Heart left ventricle (tissue), 16 donors: ENCODE measurements at regions of chr12 and their contacts with region 1.

Region 1: GRCh38 chr12:69639400-69640016 is 28.8 kb upstream of the LRRC10 start:
- DNase-seq: peak; percentile 43 to 79 (median 64)
- ATAC-seq: peak in 3 of 4 donors; percentile 53 to 74 (median 66)
- H3K4me3 ChIP-seq: no peak overlapping the region
- H3K27ac ChIP-seq: no peak overlapping the region
- H3K4me1 ChIP-seq: peaks cover 0 to 18% (median 0%) of the 10 kb centered on the region in 12 donors
- H3K27me3 ChIP-seq: no peaks in the 10 kb centered on the region
- CTCF ChIP-seq: peak; percentile 72 to 91 (median 86)
- POLR2A ChIP-seq: no peak

Region 2: GRCh38 chr12:69211160-69211559 is 428.3 kb before region 1 on chr12:
- intact Hi-C with region 1: no loop called
- DNase-seq: no peak
- ATAC-seq: no peak
- H3K4me3 ChIP-seq: no peak overlapping the region
- H3K27ac ChIP-seq: no peak overlapping the region
- H3K4me1 ChIP-seq: no peaks in the 10 kb centered on the region
- H3K27me3 ChIP-seq: no peaks in the 10 kb centered on the region
- CTCF ChIP-seq: no peak
- POLR2A ChIP-seq: no peak

Region 3: DNA sequence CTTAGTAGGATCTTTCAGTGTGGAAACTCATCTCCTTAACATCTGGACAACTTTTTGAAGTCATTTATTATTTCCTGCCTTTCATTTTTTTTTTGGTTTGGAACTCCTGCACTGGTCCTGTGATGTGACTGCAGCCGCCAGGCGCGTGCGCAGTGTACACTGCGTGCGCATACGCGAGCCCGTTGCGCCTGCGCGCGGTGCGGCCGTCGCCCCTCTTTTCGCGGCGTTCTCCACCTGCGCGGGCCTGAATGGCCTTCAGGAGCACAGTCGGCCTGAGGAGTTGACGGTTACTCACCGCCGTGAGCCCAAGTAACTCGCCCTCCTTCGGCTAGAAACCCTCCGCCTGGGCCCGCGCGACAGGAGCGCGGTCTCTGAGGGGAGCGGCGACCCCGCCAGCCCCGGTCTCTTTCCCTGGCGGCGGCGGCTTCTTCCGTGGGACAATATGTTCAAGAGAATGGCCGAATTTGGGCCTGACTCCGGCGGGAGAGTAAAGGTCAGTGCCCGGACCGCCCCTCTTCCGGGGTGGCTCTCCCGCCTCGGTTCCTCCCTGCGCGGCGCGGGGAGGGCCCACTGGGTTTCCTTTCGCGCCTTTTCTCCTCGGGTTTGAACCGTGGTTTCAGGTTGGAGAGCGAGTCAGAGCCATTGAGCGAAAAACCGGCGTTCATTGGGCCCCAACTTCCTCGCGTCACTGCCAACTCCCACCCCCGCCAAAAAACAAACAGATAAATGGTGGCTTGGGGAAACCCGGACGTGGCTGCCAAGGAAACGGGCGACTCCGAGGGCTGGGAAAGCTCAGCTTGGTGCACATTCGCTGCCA is 279.8 kb before region 1 on chr12 and contains the start of gene YEATS4:
- intact Hi-C with region 1: loop called in 4 of 10 experiments (anchors 1 to 5 kb)
- DNase-seq: peak; percentile 82 to 92 (median 86)
- ATAC-seq: peak; percentile 96 to 98 (median 98)
- H3K4me3 ChIP-seq: peak within 1 kb of the TSS; percentile 52 to 93 (median 80)
- H3K27ac ChIP-seq: peak within 1 kb of the TSS; percentile 83 to 99 (median 92)
- H3K4me1 ChIP-seq: peaks cover 0 to 25% (median 9%) of the 10 kb centered on the region in 12 donors
- H3K27me3 ChIP-seq: no peaks in the 10 kb centered on the region
- CTCF ChIP-seq: no peak
- POLR2A ChIP-seq: no peak
- total RNA-seq, gene YEATS4: 6.7 to 45.0 (median 9.9) TPM

Region 4: GRCh38 chr12:69388371-69388770 is 251.1 kb before region 1 on chr12:
- intact Hi-C with region 1: loop called in 3 of 10 experiments (anchors 10 kb)
- DNase-seq: no peak
- ATAC-seq: no peak
- H3K4me3 ChIP-seq: no peak overlapping the region
- H3K27ac ChIP-seq: no peak overlapping the region
- H3K4me1 ChIP-seq: no peaks in the 10 kb centered on the region
- H3K27me3 ChIP-seq: no peaks in the 10 kb centered on the region
- CTCF ChIP-seq: peak; percentile 37 to 70 (median 56)
- POLR2A ChIP-seq: no peak

Region 5: GRCh38 chr12:69415471-69416275 is 223.8 kb before region 1 on chr12:
- intact Hi-C with region 1: loop called in 1 of 10 experiments (anchors 10 kb)
- DNase-seq: peak; percentile 29 to 60 (median 54)
- ATAC-seq: peak in 3 of 4 donors; percentile 81 to 94 (median 91)
- H3K4me3 ChIP-seq: peak overlapping the region in 3 of 12 donors; percentile 2 to 23 (median 11)
- H3K27ac ChIP-seq: peak overlapping the region in 2 of 12 donors; percentile 22 to 41
- H3K4me1 ChIP-seq: peaks cover 0 to 11% (median 3%) of the 10 kb centered on the region in 12 donors
- H3K27me3 ChIP-seq: no peaks in the 10 kb centered on the region
- CTCF ChIP-seq: peak; percentile 42 to 82 (median 66)
- POLR2A ChIP-seq: no peak

Region 6: GRCh38 chr12:69540987-69541386 is 98.5 kb before region 1 on chr12:
- intact Hi-C with region 1: no loop called
- DNase-seq: no peak
- ATAC-seq: no peak
- H3K4me3 ChIP-seq: no peak overlapping the region
- H3K27ac ChIP-seq: no peak overlapping the region
- H3K4me1 ChIP-seq: no peaks in the 10 kb centered on the region
- H3K27me3 ChIP-seq: no peaks in the 10 kb centered on the region
- CTCF ChIP-seq: no peak
- POLR2A ChIP-seq: no peak

Region 7: GRCh38 chr12:69585189-69586062 is 54.1 kb before region 1 on chr12 and contains the start of gene CCT2:
- intact Hi-C with region 1: loop called in 2 of 10 experiments (anchors 5 kb)
- DNase-seq: peak; percentile 97 to 98 (median 98)
- ATAC-seq: peak; percentile 99 to 100 (median 100)
- H3K4me3 ChIP-seq: peak within 1 kb of the TSS; percentile 63 to 99 (median 82)
- H3K27ac ChIP-seq: peak within 1 kb of the TSS; percentile 66 to 92 (median 90)
- H3K4me1 ChIP-seq: peaks cover 0 to 22% (median 11%) of the 10 kb centered on the region in 12 donors
- H3K27me3 ChIP-seq: no peaks in the 10 kb centered on the region
- CTCF ChIP-seq: peak in 9 of 12 donors; percentile 10 to 49 (median 23)
- POLR2A ChIP-seq: peak in 1 of 2 donors; percentile 86
- total RNA-seq, gene CCT2: 63.2 to 168 (median 93.3) TPM

Region 8: DNA sequence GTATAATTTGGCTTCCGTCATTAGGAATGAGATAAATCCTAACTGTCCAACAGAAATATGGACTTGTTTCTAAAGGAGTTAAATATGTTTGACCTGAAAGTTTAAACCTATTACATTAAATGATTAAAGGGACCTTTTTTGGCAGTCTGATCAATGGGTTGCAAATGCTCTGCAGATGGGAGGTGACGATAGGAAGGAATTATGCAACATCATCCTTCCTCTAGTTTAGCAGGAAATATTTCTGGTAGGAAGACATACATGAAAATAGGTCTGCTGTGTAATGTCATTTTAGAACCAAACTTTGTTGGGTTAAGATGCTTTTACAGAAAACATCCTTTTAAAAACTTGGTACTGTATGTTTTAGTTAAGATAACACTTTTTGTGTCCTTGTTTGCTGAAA is 31.4 kb before region 1 on chr12:
- intact Hi-C with region 1: loop called in 1 of 10 experiments (anchors 5 kb)
- DNase-seq: no peak
- ATAC-seq: no peak
- H3K4me3 ChIP-seq: peak overlapping the region in 10 of 12 donors; percentile 12 to 62 (median 47)
- H3K27ac ChIP-seq: peak overlapping the region in 11 of 12 donors; percentile 20 to 84 (median 64)
- H3K4me1 ChIP-seq: peaks cover 0 to 10% (median 0%) of the 10 kb centered on the region in 12 donors
- H3K27me3 ChIP-seq: no peaks in the 10 kb centered on the region
- CTCF ChIP-seq: no peak
- POLR2A ChIP-seq: no peak

Region 9: GRCh38 chr12:69779928-69780327 is 140.4 kb after region 1 on chr12:
- intact Hi-C with region 1: no loop called
- DNase-seq: no peak
- ATAC-seq: no peak
- H3K4me3 ChIP-seq: no peak overlapping the region
- H3K27ac ChIP-seq: no peak overlapping the region
- H3K4me1 ChIP-seq: no peaks in the 10 kb centered on the region
- H3K27me3 ChIP-seq: no peaks in the 10 kb centered on the region
- CTCF ChIP-seq: no peak
- POLR2A ChIP-seq: no peak

Region 10: DNA sequence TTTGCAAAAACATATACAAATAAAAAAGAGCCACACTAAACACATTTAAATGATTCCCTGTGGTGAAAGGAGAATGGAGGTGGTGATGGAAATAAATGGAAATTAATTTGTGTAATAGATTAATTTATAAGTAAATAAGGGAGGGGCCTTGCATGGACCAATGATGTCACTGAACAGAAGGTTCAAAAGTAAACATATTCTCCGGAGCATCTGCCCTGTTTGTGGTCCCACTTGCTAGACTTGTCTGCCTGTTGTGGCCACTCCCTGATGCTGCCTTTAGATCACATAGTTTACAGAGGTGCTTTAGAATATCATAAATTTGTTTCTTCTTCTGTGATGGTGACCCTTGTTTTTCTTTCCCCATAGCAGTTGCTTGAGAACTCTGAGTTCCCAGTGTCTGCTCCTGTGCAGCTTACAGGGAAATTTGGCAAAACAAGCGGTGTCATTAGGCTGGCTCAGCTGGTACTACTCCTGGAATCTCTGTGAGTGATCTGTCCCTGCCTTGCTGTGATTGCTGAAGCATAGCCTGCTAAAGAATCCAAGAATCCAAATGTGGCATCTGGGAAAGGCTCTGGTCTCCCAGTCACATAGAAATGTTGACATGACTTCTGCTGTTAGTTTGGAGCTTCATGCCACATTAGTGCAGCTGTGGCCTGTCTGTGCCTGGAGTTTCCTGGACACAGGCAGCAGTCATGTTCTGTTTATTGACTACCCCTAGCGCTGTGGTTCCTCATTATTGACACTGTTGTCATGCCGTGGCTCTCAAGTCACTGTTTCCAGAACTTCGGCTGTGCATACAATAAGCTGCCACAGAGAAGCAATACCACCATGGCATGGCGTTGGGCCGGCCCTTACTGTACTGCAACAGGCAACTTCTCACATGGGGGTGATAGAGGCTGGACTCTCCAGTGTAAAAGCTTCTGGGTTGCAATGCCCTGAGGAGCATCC is 352.1 kb after region 1 on chr12:
- intact Hi-C with region 1: no loop called
- DNase-seq: no peak
- ATAC-seq: peak in 1 of 4 donors; percentile 21
- H3K4me3 ChIP-seq: no peak overlapping the region
- H3K27ac ChIP-seq: no peak overlapping the region
- H3K4me1 ChIP-seq: peaks cover 0 to 21% (median 10%) of the 10 kb centered on the region in 12 donors
- H3K27me3 ChIP-seq: no peaks in the 10 kb centered on the region
- CTCF ChIP-seq: no peak
- POLR2A ChIP-seq: no peak